CD4-positive, alpha-beta T cell (primary cell): ENCODE measurements at regions of chr18 and their contacts with region 1.

Region 1: GRCh38 chr18:47876813-47877212 is 53.6 kb downstream of the SMAD2 start:
- DNase-seq: peak in 2 of 14 experiments; percentile 19
- ATAC-seq: no peak
- H3K4me3 ChIP-seq: no peak overlapping the region
- H3K4me3 Mint-ChIP-seq: no peak overlapping the region
- H3K27ac ChIP-seq: no peak overlapping the region
- H3K27ac Mint-ChIP-seq: peak overlapping the region; percentile 54
- H3K4me1 ChIP-seq: no peaks in the 10 kb centered on the region
- H3K4me1 Mint-ChIP-seq: peaks cover 72% of the 10 kb centered on the region
- H3K27me3 ChIP-seq: no peaks in the 10 kb centered on the region
- H3K27me3 Mint-ChIP-seq: no peaks in the 10 kb centered on the region
- CTCF ChIP-seq: no peak

Region 2: GRCh38 chr18:47858607-47859006 is 18.2 kb before region 1 on chr18:
- CTCF ChIA-PET with region 1: no interaction called
- POLR2A ChIA-PET with region 1: no interaction called
- intact Hi-C with region 1: no loop called
- DNase-seq: no peak
- ATAC-seq: no peak
- H3K4me3 ChIP-seq: no peak overlapping the region
- H3K4me3 Mint-ChIP-seq: no peak overlapping the region
- H3K27ac ChIP-seq: no peak overlapping the region
- H3K27ac Mint-ChIP-seq: no peak overlapping the region
- H3K4me1 ChIP-seq: no peaks in the 10 kb centered on the region
- H3K4me1 Mint-ChIP-seq: no peaks in the 10 kb centered on the region
- H3K27me3 ChIP-seq: no peaks in the 10 kb centered on the region
- H3K27me3 Mint-ChIP-seq: no peaks in the 10 kb centered on the region
- CTCF ChIP-seq: no peak

Region 3: DNA sequence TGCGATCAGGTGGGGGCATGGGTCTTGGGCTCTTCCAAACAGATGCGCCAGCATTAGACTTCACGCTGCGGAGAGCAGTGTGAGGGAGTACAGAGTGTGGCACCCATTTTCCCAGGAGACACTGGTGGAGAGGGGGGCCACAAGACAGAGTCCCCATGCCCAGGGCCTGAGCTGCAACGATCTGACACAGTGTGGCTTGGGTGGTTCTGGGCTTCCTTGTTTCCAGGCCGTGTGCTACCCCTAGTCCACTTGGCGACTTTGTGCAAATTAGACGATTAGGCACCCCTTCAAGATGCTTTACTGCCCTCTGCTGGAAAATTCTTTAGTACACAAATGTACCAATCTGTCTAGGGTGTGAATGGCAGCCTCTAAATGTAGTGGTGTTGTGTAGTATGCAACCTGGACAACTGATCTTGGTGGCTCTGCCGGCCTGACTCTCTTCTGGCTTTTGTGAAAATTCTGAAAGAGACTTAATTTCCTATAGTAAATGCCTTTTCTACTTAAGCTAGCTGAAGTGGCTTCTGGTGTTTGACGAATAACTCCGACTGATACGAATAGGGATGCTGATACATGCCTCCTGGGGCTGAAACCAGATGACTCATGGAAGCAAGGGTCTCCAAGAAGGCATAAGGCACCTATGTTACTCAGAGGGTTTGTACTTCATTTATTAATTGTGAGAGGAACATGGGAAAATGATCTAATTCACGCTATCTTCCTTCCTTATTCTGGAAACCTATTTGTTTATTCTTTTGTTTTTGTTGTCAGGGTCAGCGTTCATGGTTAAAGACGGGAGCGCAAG is 145.9 kb after region 1 on chr18:
- CTCF ChIA-PET with region 1: no interaction called
- POLR2A ChIA-PET with region 1: no interaction called
- intact Hi-C with region 1: loop called in 1 of 2 experiments (anchors 2 kb)
- DNase-seq: peak in 3 of 14 experiments; percentile 52 to 65 (median 63)
- ATAC-seq: no peak
- H3K4me3 ChIP-seq: no peak overlapping the region
- H3K4me3 Mint-ChIP-seq: no peak overlapping the region
- H3K27ac ChIP-seq: no peak overlapping the region
- H3K27ac Mint-ChIP-seq: no peak overlapping the region
- H3K4me1 ChIP-seq: no peaks in the 10 kb centered on the region
- H3K4me1 Mint-ChIP-seq: peaks cover 5% of the 10 kb centered on the region
- H3K27me3 ChIP-seq: peaks cover 7 to 13% of the 10 kb centered on the region in 2 experiments
- H3K27me3 Mint-ChIP-seq: peaks cover 44% of the 10 kb centered on the region
- CTCF ChIP-seq: peak; percentile 56